ENCODE measurements at regions of chr2 and their contacts with region 1.

Region 1: DNA sequence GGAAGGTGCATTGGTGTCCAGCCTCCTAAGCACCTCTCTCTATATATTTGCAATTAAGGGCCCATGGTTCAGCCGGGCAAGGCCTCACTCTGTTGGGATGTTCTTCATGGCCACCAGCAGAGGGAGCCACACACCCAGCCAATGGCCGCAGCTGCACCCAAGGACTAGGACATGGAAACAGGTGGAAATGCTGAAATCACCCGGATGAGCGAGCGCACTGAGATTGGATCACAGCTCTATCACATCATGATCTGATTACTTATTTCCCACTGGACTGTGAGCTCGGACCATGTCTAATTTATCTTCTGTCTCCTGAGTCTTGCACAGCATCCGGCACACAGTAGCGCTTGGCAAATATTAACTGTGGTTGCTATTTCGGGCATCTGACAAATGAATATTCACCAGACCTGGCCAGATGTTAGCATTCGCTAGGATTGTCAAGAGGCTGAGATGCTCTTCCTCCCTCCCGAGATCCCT is 31.2 kb downstream of the KIF3C start:
- DNase-seq: peak; percentile 84
- CTCF ChIP-seq: peak; percentile 93

Region 2: DNA sequence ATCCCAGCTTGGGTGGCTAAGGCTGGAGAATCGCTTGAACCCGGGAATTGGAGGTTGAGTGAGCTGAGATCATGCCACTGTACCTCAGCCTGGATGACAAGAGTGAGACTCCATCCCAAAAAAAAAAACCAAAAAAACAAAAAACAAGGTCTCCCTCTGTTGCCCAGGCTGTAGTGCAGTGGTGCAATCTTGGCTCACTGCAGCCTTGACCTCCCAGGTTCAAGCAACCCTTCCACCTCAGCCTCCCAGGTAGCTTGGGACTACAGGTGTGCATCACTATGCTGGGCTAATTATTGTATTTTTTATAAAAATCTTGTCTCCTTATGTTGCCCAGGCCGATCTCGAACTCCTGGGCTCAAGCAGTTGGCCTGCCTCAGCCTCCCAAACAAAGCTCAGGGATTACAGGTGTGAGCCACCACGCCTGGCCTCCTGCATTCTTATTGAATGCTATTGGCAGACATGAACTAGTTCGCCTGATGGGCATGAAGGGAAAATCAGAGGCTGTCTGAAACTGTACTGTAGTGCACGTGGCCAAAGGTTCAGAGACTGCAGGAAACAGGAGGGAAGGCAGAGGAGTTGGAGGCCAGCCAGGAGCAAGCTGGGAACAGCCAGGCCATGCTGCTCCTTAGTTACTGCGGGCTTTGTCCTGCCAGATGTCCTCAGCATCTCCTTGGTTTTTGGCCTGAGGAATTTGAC is 56.8 kb before region 1 on chr2:
- CTCF ChIA-PET with region 1: interaction called, 11 read pairs
- POLR2A ChIA-PET with region 1: no interaction called
- DNase-seq: no peak
- CTCF ChIP-seq: no peak

Region 3: GRCh38 chr2:25936889-25937545 is 14.1 kb before region 1 on chr2:
- CTCF ChIA-PET with region 1: interaction called, 33 read pairs
- POLR2A ChIA-PET with region 1: no interaction called
- DNase-seq: no peak
- CTCF ChIP-seq: no peak

Region 4: GRCh38 chr2:26099933-26100332 is 148.8 kb after region 1 on chr2:
- CTCF ChIA-PET with region 1: no interaction called
- POLR2A ChIA-PET with region 1: no interaction called
- DNase-seq: no peak
- CTCF ChIP-seq: no peak